ENCODE measurements at regions of chr1 and their contacts with region 1.

Region 1: GRCh38 chr1:20633190-20634064 is at the start of gene PINK1:
- DNase-seq: peak; percentile 83 to 92
- H3K4me3 ChIP-seq: peak within 1 kb of the TSS; percentile 72
- H3K4me3 Mint-ChIP-seq: peak within 1 kb of the TSS; percentile 83
- H3K27ac Mint-ChIP-seq: peak within 1 kb of the TSS; percentile 56
- H3K4me1 ChIP-seq: peaks cover 20% of the 10 kb centered on the region
- H3K4me1 Mint-ChIP-seq: peaks cover 9% of the 10 kb centered on the region
- H3K27me3 ChIP-seq: no peaks in the 10 kb centered on the region
- H3K27me3 Mint-ChIP-seq: no peaks in the 10 kb centered on the region
- CTCF ChIP-seq: peak; percentile 85 to 93
- total RNA-seq, gene PINK1: 18.4 and 23.2 TPM in 2 replicates

Region 2: DNA sequence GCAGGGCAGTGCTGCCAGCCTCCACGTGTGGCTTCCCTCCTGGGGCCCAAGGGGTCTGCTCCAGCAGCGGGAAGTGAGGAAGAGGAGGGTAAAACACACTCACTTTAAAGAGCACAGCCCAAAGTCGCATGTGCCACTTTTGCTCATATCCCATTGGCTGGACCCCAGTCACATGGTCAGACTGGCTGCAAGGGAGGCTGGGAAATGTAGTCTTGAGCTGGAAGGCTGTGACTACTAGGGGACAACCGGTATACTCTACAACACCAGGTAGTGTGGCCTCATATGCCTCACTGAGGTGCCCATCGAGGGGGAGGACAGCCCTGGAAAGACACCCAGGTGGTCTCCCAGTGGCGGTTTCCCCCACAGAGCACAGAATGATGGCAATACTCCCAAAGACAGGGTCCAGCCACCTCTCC is 192.6 kb before region 1 on chr1:
- CTCF ChIA-PET with region 1: no interaction called
- POLR2A ChIA-PET with region 1: no interaction called
- intact Hi-C with region 1: no loop called
- DNase-seq: peak; percentile 65 to 69
- H3K4me3 ChIP-seq: no peak overlapping the region
- H3K4me3 Mint-ChIP-seq: no peak overlapping the region
- H3K27ac Mint-ChIP-seq: no peak overlapping the region
- H3K4me1 ChIP-seq: peaks cover 7% of the 10 kb centered on the region; the same call in 1 of the 2 replicates
- H3K4me1 Mint-ChIP-seq: no peaks in the 10 kb centered on the region
- H3K27me3 ChIP-seq: no peaks in the 10 kb centered on the region
- H3K27me3 Mint-ChIP-seq: no peaks in the 10 kb centered on the region
- CTCF ChIP-seq: no peak

Region 3: DNA sequence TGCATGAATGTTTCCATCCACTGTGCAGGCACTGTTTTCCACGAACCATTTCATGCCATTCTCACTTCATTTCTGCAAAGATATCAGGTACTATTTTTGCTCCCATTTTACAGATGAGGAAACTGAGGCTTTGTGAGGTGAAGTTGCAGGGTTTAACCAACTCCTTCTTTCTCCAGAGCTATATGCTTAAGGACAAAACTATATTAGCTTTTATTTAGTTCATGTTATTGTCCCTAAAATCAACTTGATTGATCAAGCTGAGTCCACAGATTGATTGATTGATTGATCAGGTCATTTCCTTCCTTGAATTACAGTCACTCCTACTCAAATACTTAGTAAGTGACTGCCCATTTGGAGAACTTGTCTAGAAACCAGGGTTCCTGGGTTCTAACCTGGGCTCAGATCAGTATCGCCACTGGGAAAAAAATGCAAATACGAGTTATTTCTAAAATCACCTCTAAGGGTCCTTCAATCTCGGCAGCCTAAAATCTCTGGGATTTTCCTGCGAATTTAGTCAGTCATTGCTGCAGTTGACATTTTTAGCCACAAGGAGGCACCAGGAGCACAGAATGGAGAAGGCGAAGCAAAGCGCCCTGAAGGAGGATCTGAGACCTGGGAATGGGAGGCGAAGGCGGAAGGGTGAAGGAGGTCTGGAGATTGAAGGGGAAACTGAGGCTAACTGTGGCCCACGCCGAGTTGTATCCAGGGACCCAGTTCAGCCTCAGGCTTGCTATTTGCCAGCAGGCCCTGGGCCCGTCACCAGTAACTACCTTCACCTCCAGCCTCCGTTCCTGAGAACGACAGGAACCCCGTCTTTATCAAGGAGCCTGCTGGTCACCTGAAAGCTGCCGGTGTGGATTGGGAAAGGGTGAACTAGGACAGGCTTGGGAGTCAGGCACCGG is 111.2 kb before region 1 on chr1:
- CTCF ChIA-PET with region 1: interaction called, 6 read pairs
- POLR2A ChIA-PET with region 1: no interaction called
- intact Hi-C with region 1: loop called (anchors 1 kb)
- DNase-seq: peak; percentile 74 to 84
- H3K4me3 ChIP-seq: no peak overlapping the region
- H3K4me3 Mint-ChIP-seq: no peak overlapping the region
- H3K27ac Mint-ChIP-seq: no peak overlapping the region
- H3K4me1 ChIP-seq: no peaks in the 10 kb centered on the region
- H3K4me1 Mint-ChIP-seq: no peaks in the 10 kb centered on the region
- H3K27me3 ChIP-seq: no peaks in the 10 kb centered on the region
- H3K27me3 Mint-ChIP-seq: no peaks in the 10 kb centered on the region
- CTCF ChIP-seq: peak; percentile 80 to 82

Region 4: GRCh38 chr1:20534659-20535417 is 98.6 kb before region 1 on chr1:
- CTCF ChIA-PET with region 1: interaction called, 5 read pairs
- POLR2A ChIA-PET with region 1: no interaction called
- intact Hi-C with region 1: loop called (anchors 5 kb)
- DNase-seq: no peak
- H3K4me3 ChIP-seq: no peak overlapping the region
- H3K4me3 Mint-ChIP-seq: no peak overlapping the region
- H3K27ac Mint-ChIP-seq: peak overlapping the region; percentile 6
- H3K4me1 ChIP-seq: peaks cover 29% of the 10 kb centered on the region
- H3K4me1 Mint-ChIP-seq: peaks cover 41% of the 10 kb centered on the region
- H3K27me3 ChIP-seq: no peaks in the 10 kb centered on the region
- H3K27me3 Mint-ChIP-seq: no peaks in the 10 kb centered on the region
- CTCF ChIP-seq: no peak

Region 5: GRCh38 chr1:20574686-20575540 is 58.5 kb before region 1 on chr1:
- CTCF ChIA-PET with region 1: interaction called, 41 read pairs
- POLR2A ChIA-PET with region 1: no interaction called
- intact Hi-C with region 1: loop called (anchors 2 kb)
- DNase-seq: peak; percentile 59 to 75
- H3K4me3 ChIP-seq: no peak overlapping the region
- H3K4me3 Mint-ChIP-seq: no peak overlapping the region
- H3K27ac Mint-ChIP-seq: no peak overlapping the region
- H3K4me1 ChIP-seq: no peaks in the 10 kb centered on the region
- H3K4me1 Mint-ChIP-seq: no peaks in the 10 kb centered on the region
- H3K27me3 ChIP-seq: no peaks in the 10 kb centered on the region
- H3K27me3 Mint-ChIP-seq: no peaks in the 10 kb centered on the region
- CTCF ChIP-seq: peak; percentile 54 to 65

Region 6: DNA sequence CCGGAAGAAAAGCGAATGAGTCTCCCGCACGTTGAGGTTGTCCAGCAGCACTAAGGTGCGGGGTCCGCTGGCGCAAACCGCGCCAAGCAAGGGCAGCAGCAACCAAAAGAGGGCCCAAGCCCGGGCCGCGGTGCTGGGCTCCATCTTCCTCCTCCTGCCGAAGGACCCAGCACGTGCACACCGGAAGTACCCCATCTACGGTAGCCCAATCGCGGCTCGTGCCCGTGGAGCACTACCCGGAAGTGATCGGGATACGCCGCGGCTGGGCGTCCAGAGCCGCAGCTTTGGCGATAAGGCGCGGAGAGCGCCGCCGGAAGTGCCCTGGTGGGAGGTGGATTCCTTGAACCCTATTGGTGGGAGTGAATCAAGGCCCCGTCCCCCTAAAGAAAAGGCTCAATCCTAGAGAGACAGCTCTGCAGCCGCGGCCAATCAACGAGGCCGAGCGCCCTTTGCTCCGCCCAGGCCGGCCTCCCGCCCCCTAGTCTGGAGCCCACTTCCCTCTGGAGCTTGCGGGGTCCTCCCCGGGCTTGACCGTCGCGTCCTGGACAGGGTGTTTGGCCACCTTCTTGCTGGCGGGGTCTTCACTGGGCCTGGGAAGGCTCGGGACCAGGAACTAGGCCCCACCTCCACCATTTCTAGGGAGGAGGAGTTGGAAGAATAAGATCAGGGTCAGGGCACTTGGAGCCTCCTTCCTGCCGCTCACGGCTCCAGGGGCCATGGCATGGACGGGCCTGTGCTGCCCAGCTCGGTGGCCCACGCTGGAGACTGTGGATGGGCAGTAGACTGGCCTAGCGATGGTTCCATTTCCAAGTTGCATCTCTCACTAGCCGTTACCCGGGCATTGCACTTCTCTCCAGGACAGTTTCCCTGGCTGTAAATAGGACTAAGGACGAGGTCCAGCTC is 28.0 kb after region 1 on chr1 and contains the start of gene DDOST:
- CTCF ChIA-PET with region 1: interaction called, 12 read pairs
- POLR2A ChIA-PET with region 1: no interaction called
- intact Hi-C with region 1: no loop called
- DNase-seq: peak; percentile 96 to 97
- H3K4me3 ChIP-seq: peak within 1 kb of the TSS; percentile 75
- H3K4me3 Mint-ChIP-seq: peak within 1 kb of the TSS; percentile 95
- H3K27ac Mint-ChIP-seq: peak within 1 kb of the TSS; percentile 95
- H3K4me1 ChIP-seq: no peaks in the 10 kb centered on the region
- H3K4me1 Mint-ChIP-seq: peaks cover 19% of the 10 kb centered on the region
- H3K27me3 ChIP-seq: no peaks in the 10 kb centered on the region
- H3K27me3 Mint-ChIP-seq: no peaks in the 10 kb centered on the region
- CTCF ChIP-seq: peak in 1 of 2 experiments; percentile 58
- total RNA-seq, gene DDOST: 332 and 339 TPM in 2 replicates